ENCODE measurements at regions of chr19 and their contacts with region 1.

Region 1: GRCh38 chr19:3108775-3109174 is 14.6 kb downstream of the GNA11 start:
- DNase-seq: peak; percentile 61 to 86
- H3K4me3 ChIP-seq: no peak overlapping the region
- H3K27ac ChIP-seq: no peak overlapping the region
- H3K4me1 ChIP-seq: peaks cover 0 to 5% (median 2%) of the 10 kb centered on the region in 4 experiments; a peak in 5 of 7 replicates
- H3K27me3 ChIP-seq: peaks cover 0 to 2% (median 0%) of the 10 kb centered on the region in 4 experiments; a peak in 1 of 7 replicates
- CTCF ChIP-seq: peak; percentile 74 to 97 (median 92)
- EP300 ChIP-seq: no peak
- POLR2A ChIP-seq: no peak
- RAD21 ChIP-seq: peak; percentile 49 to 59

Region 2: DNA sequence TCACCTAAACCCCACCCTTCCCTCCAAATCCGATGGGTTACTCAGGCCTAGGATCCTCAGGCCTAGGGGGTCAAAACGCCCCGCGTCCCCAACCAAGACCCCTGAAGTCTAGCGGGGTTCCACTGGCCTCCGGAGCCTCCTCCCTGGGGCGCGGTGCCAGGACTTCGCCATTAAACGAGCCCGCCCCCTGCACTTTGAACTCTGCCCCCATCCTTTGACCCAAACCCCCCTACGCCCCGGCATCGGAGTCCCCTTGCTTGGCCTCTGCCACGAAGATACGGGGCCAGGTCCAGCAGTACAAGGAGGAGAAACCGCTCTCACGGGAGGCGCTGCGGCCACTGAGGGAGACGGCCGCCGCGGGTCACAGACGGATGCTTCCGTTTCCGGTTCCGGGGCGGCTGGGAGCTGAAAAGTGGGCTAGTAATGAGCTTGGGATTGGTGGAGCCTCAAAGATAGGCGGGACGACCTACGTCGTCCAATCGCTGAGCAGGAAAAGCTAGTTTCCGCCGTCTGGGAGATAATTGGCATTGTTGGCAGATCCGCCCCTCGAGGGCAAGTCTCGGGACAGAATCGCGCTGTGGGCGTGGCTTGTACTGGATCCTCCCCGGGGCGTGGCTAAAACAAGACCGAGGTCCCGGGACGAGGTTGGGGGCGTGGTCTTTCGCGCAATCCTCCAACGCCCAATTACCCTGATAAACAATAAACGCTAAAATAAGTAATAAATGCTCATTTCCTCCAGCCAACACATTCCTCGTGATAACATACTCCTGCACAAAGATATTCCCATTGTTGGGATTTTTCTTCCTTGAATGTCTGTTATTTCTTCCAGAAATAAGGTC is 158.3 kb before region 1 on chr19:
- CTCF ChIA-PET with region 1: interaction called, 260 read pairs
- POLR2A ChIA-PET with region 1: no interaction called
- DNase-seq: peak; percentile 99 to 100
- H3K4me3 ChIP-seq: peak overlapping the region; percentile 73 to 98 (median 90)
- H3K27ac ChIP-seq: peak overlapping the region; percentile 74
- H3K4me1 ChIP-seq: peaks cover 0 to 6% (median 4%) of the 10 kb centered on the region in 4 experiments; a peak in 4 of 7 replicates
- H3K27me3 ChIP-seq: no peaks in the 10 kb centered on the region
- CTCF ChIP-seq: peak in 1 of 3 experiments; percentile 11; a peak in 1 of 4 replicates
- EP300 ChIP-seq: no peak
- POLR2A ChIP-seq: peak; percentile 87 to 96
- RAD21 ChIP-seq: no peak

Region 3: GRCh38 chr19:2977001-2977685 is 131.6 kb before region 1 on chr19 and contains the start of gene TLE6:
- CTCF ChIA-PET with region 1: interaction called, 10 read pairs
- POLR2A ChIA-PET with region 1: interaction called, 3 read pairs
- DNase-seq: peak; percentile 95 to 97
- H3K4me3 ChIP-seq: peak within 1 kb of the TSS; percentile 33 to 58 (median 42); a peak in 7 of 8 replicates
- H3K27ac ChIP-seq: no peak within 1 kb of the TSS
- H3K4me1 ChIP-seq: peaks cover 0 to 13% (median 7%) of the 10 kb centered on the region in 4 experiments; a peak in 5 of 7 replicates
- H3K27me3 ChIP-seq: peaks cover 0 to 13% (median 10%) of the 10 kb centered on the region in 4 experiments; a peak in 6 of 7 replicates
- CTCF ChIP-seq: no peak
- EP300 ChIP-seq: peak in 1 of 2 experiments; percentile 63; a peak in 1 of 3 replicates
- POLR2A ChIP-seq: no peak
- RAD21 ChIP-seq: no peak
- total RNA-seq, gene TLE6: 1.8 and 2.5 TPM in 2 replicates

Region 4: GRCh38 chr19:3057306-3057714 is 51.5 kb before region 1 on chr19:
- CTCF ChIA-PET with region 1: interaction called, 16 read pairs
- POLR2A ChIA-PET with region 1: interaction called, 3 read pairs
- DNase-seq: peak in 1 of 2 experiments; percentile 64
- H3K4me3 ChIP-seq: peak overlapping the region in 1 of 4 experiments; percentile 22; a peak in 2 of 8 replicates
- H3K27ac ChIP-seq: no peak overlapping the region
- H3K4me1 ChIP-seq: peaks cover 3 to 36% (median 27%) of the 10 kb centered on the region in 4 experiments
- H3K27me3 ChIP-seq: no peaks in the 10 kb centered on the region; a peak in 1 of 7 replicates
- CTCF ChIP-seq: no peak
- EP300 ChIP-seq: peak in 1 of 2 experiments; percentile 98; a peak in 1 of 3 replicates
- POLR2A ChIP-seq: no peak
- RAD21 ChIP-seq: no peak

Region 5: GRCh38 chr19:3075895-3076431 is 32.8 kb before region 1 on chr19:
- CTCF ChIA-PET with region 1: interaction called, 339 read pairs
- POLR2A ChIA-PET with region 1: interaction called, 9 read pairs
- DNase-seq: peak in 1 of 2 experiments; percentile 91
- H3K4me3 ChIP-seq: peak overlapping the region in 3 of 4 experiments; percentile 15 to 48 (median 18); a peak in 4 of 8 replicates
- H3K27ac ChIP-seq: no peak overlapping the region
- H3K4me1 ChIP-seq: peaks cover 0 to 4% (median 0%) of the 10 kb centered on the region in 4 experiments; a peak in 1 of 7 replicates
- H3K27me3 ChIP-seq: peaks cover 0 to 4% (median 1%) of the 10 kb centered on the region in 4 experiments; a peak in 1 of 7 replicates
- CTCF ChIP-seq: peak; percentile 88 to 95 (median 92)
- EP300 ChIP-seq: peak in 1 of 2 experiments; percentile 13; a peak in 1 of 3 replicates
- POLR2A ChIP-seq: no peak
- RAD21 ChIP-seq: peak; percentile 91 to 94

Region 6: GRCh38 chr19:3094601-3095437 is 14.0 kb before region 1 on chr19:
- CTCF ChIA-PET with region 1: interaction called, 23 read pairs
- POLR2A ChIA-PET with region 1: interaction called, 3 read pairs
- DNase-seq: no peak
- H3K4me3 ChIP-seq: peak overlapping the region; percentile 74 to 82 (median 79)
- H3K27ac ChIP-seq: no peak overlapping the region
- H3K4me1 ChIP-seq: peaks cover 3 to 18% (median 15%) of the 10 kb centered on the region in 4 experiments; a peak in 6 of 7 replicates
- H3K27me3 ChIP-seq: no peaks in the 10 kb centered on the region
- CTCF ChIP-seq: no peak
- EP300 ChIP-seq: no peak
- POLR2A ChIP-seq: no peak
- RAD21 ChIP-seq: no peak

Region 7: DNA sequence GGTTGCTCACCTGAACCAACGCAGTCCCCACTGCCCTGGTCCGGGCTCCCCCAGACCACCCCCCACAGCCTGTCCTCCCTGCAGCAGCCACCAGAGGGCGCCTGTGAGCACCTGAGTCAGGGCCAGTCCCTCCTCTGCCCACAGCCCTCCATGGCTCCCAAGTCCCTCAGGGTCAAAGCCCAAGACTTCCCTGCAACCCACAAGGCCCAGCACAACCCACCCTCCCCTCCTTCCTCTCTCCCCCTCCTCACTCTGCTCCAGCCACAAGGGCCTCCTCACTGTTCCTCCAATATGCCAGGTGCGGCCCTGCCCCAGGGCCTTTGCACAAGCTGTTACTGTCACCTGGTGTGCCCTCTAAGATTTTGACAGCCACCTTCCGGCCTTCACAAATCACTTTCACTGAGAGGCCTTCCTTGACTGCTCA is 37.9 kb after region 1 on chr19:
- CTCF ChIA-PET with region 1: interaction called, 11 read pairs
- POLR2A ChIA-PET with region 1: no interaction called
- DNase-seq: peak in 1 of 2 experiments; percentile 96
- H3K4me3 ChIP-seq: no peak overlapping the region
- H3K27ac ChIP-seq: no peak overlapping the region
- H3K4me1 ChIP-seq: peaks cover 0 to 5% (median 2%) of the 10 kb centered on the region in 4 experiments; a peak in 1 of 7 replicates
- H3K27me3 ChIP-seq: no peaks in the 10 kb centered on the region; a peak in 1 of 7 replicates
- CTCF ChIP-seq: peak; percentile 81 to 95 (median 90)
- EP300 ChIP-seq: no peak
- POLR2A ChIP-seq: no peak
- RAD21 ChIP-seq: peak; percentile 34 to 48; a peak in 2 of 4 replicates

Region 8: GRCh38 chr19:3195948-3196695 is 87.3 kb after region 1 on chr19:
- CTCF ChIA-PET with region 1: no interaction called
- POLR2A ChIA-PET with region 1: no interaction called
- DNase-seq: no peak
- H3K4me3 ChIP-seq: no peak overlapping the region
- H3K27ac ChIP-seq: no peak overlapping the region
- H3K4me1 ChIP-seq: no peaks in the 10 kb centered on the region
- H3K27me3 ChIP-seq: no peaks in the 10 kb centered on the region
- CTCF ChIP-seq: no peak
- EP300 ChIP-seq: no peak
- POLR2A ChIP-seq: no peak
- RAD21 ChIP-seq: no peak